Vagina (tissue), 2 donors: ENCODE measurements at regions of chr16 and their contacts with region 1.

Region 1: DNA sequence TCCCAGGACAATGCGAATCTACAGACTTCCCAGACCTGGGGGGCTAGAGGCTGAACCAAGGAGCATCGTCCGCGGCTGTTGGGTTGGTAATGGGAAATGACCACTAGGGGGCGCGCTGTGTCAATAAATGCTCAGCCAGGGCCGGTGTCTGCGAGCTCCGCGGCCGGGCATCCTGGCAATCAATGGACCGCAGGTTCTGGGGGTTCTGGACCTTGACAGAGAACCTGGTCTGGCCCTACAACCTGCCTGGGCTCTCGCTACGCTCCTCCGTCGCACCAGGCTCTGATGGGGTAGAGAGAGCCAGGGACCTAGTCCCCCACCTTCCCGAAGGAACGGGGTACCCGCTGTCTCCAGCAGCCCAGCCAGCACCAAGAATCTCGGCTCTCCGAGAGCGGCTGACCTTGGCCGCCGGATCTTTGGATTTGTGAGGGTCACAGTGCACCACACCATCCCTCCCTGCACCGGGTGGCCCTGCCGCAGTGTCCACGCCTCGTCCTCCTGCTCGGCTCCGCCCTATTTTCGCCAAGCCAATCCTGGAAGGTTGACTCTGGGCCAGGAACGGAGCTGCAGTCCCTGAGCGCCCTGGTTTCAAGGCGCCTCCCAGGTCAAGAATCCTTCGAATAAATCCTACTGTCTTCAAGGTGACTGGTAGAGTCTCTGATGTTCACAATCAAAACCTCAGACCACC is 20.4 kb upstream of the BEAN1 start:
- DNase-seq: peak in 1 of 2 donors; percentile 87
- H3K4me3 ChIP-seq: peak overlapping the region; percentile 49 to 60
- H3K27ac ChIP-seq: no peak overlapping the region
- H3K4me1 ChIP-seq: no peaks in the 10 kb centered on the region
- H3K27me3 ChIP-seq: no peaks in the 10 kb centered on the region
- CTCF ChIP-seq: peak; percentile 84 to 89 (median 88)
- POLR2A ChIP-seq: no peak

Region 2: DNA sequence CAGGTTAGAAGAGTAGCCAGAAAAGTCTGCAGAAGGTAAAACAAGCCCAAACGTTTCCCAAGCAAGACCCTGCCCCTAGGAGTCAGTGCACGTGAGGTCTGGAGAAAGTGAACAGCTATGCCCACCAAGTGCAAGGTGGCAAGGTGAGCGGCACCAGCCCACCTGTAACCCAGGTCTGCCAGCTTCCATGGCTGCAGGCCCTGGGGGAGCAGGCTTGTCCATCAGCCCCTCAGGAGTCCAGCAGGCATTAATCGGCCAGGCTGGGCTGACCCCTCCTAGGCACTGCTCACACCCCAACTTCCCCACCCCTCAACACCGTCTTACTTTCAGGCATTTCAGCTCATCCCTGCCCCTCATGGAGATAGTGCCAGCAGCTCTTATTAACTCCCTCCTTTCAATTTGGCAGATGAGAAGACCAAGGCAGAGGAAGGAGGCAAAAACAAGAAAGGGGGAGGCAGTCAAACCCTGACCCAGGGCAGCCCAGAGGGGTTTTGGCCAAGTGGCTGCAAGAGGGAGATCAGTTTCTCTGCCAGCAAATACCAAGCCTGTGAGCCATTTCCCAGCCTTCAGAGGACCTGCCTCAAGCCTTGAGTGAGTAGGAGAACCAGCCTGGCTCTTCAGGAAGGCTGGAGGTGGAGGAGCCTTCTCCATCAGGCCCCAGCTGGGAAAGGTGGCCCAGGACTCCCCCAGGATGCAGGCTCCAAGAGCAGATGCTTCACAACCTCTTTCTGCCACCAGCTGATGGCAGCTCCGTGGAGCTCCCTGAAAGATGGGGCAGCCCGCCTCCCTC is 35.1 kb after region 1 on chr16:
- intact Hi-C with region 1: no loop called
- DNase-seq: no peak
- H3K4me3 ChIP-seq: no peak overlapping the region
- H3K27ac ChIP-seq: no peak overlapping the region
- H3K4me1 ChIP-seq: no peaks in the 10 kb centered on the region
- H3K27me3 ChIP-seq: no peaks in the 10 kb centered on the region
- CTCF ChIP-seq: no peak
- POLR2A ChIP-seq: no peak

Region 3: DNA sequence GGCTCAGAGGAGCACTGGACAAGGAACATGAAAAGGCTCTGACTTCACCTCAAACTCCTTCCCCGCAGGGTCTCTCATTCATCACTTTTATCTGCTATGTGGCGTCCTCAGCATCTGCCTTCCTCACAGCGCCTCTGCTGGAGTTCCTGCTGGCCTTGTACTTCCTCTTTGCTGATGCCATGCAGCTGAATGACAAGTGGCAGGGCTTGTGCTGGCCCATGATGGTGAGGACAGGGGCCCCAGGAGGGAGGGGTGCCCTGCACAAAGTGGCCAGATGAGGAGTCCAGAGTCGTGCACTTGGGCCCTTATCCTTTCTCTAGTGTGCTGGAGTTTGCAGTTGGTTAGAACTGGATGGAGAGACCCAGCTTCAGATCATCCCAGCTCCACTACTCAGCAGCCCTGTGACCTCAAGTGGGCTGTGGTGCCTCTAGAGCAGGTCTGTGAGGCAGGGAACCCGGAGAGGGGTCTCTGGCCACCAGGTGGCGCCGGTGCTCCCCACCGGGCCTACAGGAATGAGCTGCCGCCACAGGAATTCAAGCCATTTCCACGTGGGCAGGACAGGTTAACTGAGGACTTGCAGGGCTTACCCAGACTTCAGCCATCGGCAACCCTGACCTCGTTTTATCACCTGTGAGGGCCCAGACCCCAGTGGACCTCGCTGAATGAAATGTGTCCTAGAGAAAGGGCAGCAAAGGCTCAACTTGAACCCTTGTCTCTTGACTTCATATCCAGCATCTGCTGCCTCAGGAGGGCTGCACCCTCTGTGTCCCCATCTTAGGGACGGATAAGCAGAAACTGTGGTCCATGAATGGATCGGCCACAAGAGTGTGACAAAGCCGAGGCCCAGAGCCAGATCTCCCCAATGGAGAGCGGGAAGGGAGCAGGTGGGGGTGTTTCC is 201.8 kb after region 1 on chr16:
- intact Hi-C with region 1: loop called (anchors 5 kb)
- DNase-seq: no peak
- H3K4me3 ChIP-seq: no peak overlapping the region
- H3K27ac ChIP-seq: peak overlapping the region; percentile 27
- H3K4me1 ChIP-seq: peaks cover 46% of the 10 kb centered on the region
- H3K27me3 ChIP-seq: no peaks in the 10 kb centered on the region
- CTCF ChIP-seq: peak; percentile 69 to 88 (median 82)
- POLR2A ChIP-seq: no peak

Region 4: DNA sequence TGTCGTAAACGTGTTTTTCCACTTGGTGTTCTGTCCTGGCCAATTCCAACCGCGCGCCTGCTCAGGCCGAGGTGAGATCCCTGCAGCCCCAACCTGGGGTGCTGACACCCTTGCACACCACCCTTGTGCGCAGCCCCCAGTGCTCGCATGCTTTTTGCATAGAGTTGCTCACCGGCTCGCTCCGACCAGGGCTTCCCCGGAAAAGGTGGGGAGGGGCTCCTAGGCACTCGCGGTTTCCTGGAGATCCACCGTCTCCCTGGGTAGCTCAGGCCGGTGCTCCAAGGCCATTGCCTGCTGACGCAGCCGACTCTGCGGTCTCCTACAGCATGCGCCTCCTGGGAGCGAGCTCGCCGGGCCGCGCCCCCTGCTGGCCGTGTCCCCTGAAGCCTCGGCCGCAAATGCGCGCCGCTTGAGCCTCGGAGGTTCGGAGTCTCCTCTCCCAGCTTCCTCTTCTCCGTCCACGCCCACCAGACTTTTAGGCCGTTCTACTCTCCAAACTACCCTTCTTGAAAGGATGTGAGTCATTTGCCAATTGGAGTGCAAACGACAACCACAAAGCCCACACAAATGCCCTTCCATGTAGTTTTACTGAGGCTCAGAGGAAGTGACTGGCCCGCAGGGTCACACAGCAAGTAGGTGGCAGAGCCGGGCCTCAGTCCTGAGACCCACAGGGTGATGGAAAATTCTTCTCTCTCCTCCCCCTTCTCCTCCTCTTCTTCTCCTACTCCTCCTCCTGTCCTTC is 466.4 kb after region 1 on chr16:
- intact Hi-C with region 1: loop called (anchors 10 kb)
- DNase-seq: no peak
- H3K4me3 ChIP-seq: peak overlapping the region; percentile 31 to 40
- H3K27ac ChIP-seq: peak overlapping the region; percentile 76
- H3K4me1 ChIP-seq: peaks cover 8% of the 10 kb centered on the region
- H3K27me3 ChIP-seq: no peaks in the 10 kb centered on the region
- CTCF ChIP-seq: peak; percentile 62 to 93 (median 84)
- POLR2A ChIP-seq: no peak